Activated CD4-positive, alpha-beta T cell treated with anti-CD3 and anti-CD28 coated beads, Interleukin-2, amount 10 ng/mL, durations not matched to agents 24 days and 14 days (primary cell): ENCODE measurements at regions of chr1 and their contacts with region 1.

Region 1: GRCh38 chr1:27868932-27869718 is 3.2 kb upstream of the THEMIS2 start:
- DNase-seq: peak; percentile 90
- H3K4me3 Mint-ChIP-seq: peak overlapping the region; percentile 78
- H3K27ac Mint-ChIP-seq: peak overlapping the region; percentile 91
- H3K4me1 Mint-ChIP-seq: peaks cover 41% of the 10 kb centered on the region
- H3K27me3 Mint-ChIP-seq: no peaks in the 10 kb centered on the region

Region 2: GRCh38 chr1:27568300-27569087 is 300.6 kb before region 1 on chr1:
- intact Hi-C with region 1: no loop called
- DNase-seq: peak; percentile 99
- H3K4me3 Mint-ChIP-seq: peak overlapping the region; percentile 76
- H3K27ac Mint-ChIP-seq: peak overlapping the region; percentile 43
- H3K4me1 Mint-ChIP-seq: peaks cover 25% of the 10 kb centered on the region
- H3K27me3 Mint-ChIP-seq: no peaks in the 10 kb centered on the region

Region 3: GRCh38 chr1:27789540-27790041 is 79.5 kb before region 1 on chr1:
- intact Hi-C with region 1: no loop called
- DNase-seq: no peak
- H3K4me3 Mint-ChIP-seq: no peak overlapping the region
- H3K27ac Mint-ChIP-seq: no peak overlapping the region
- H3K4me1 Mint-ChIP-seq: peaks cover 12% of the 10 kb centered on the region
- H3K27me3 Mint-ChIP-seq: no peaks in the 10 kb centered on the region

Region 4: GRCh38 chr1:27804791-27805190 is 64.3 kb before region 1 on chr1:
- intact Hi-C with region 1: no loop called
- DNase-seq: no peak
- H3K4me3 Mint-ChIP-seq: no peak overlapping the region
- H3K27ac Mint-ChIP-seq: no peak overlapping the region
- H3K4me1 Mint-ChIP-seq: no peaks in the 10 kb centered on the region
- H3K27me3 Mint-ChIP-seq: no peaks in the 10 kb centered on the region

Region 5: DNA sequence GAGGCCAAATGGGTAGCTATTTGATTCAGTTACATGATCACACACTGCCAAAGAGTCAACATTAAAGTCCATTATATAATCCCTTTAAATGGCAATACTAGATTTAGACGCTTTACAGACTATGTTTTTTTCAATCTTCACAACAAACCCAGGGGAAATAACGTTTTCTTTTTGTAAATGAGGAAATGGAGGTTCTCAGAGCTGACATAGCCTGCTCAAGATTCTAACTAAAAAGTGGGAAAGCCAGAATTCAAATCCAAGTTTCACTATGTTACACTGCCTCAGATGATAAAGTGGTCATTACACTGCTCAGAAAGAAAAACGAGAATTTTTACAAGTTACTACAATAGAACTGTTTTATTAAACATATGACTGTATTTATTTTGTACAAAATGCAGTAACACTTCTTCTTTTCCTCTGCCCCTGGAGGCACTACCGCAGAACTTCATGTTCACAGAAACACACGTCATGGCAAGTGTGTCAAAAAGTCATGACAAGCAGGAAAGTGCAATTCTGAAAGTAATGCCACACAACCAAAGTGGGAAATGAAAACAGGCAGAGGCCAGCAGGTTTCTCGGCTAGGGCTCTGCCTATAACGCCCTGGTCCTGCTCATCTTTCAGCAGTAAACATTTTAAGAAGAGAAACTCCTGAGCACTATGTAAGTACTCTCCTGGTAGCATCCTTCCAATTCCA is 22.2 kb after region 1 on chr1:
- intact Hi-C with region 1: loop called (anchors 1 kb)
- DNase-seq: peak; percentile 88
- H3K4me3 Mint-ChIP-seq: peak overlapping the region; percentile 67
- H3K27ac Mint-ChIP-seq: peak overlapping the region; percentile 90
- H3K4me1 Mint-ChIP-seq: peaks cover 54% of the 10 kb centered on the region
- H3K27me3 Mint-ChIP-seq: no peaks in the 10 kb centered on the region